A549 (cell line): ENCODE measurements at regions of chr17 and their contacts with region 1.

Region 1: GRCh38 chr17:73710095-73710592 is 65.9 kb upstream of the SDK2 start:
- DNase-seq: peak; percentile 70 to 79
- ATAC-seq: peak; percentile 59 to 90; a peak in 4 of 6 replicates
- H3K4me3 ChIP-seq: no peak overlapping the region
- H3K27ac ChIP-seq: peak overlapping the region in 1 of 2 experiments; percentile 30; a peak in 1 of 6 replicates
- H3K4me1 ChIP-seq: peaks cover 4% of the 10 kb centered on the region; the same call in 2 of the 3 replicates
- CTCF ChIP-seq: peak; percentile 77
- EP300 ChIP-seq: no peak
- POLR2A ChIP-seq: no peak
- RAD21 ChIP-seq: peak; percentile 72 to 84

Region 2: DNA sequence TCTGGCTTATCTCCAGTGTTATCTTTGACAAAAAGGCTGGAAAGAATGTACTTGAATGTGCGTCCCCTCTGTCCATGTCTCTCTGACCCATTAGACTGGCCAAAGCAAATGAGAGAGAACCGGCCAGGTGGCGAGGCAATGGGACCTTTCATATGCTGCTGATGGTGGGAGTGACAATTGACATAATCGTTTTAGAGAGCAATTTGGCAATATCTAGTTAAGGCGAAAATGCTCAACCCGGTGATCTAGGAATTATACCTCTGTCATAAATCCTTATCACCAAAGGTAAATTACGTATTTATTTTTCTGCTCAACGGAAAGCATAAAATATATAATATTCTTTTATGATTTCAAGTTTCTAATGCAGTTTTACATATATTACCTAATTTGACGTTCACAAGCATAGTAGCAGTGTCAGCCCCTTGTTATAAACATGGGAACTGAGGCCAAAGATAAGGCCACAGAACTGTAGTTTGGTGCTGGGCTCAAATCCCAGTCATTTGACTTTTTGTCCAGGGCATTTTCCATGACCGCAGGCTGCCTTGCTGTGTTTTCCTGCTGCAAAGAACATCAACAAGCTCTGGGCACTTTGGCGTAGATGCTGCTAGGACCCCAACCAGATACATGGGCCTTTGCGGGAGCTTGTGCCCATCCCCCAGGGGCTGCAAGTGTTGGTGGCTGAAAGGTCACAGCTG is 51.2 kb before region 1 on chr17:
- CTCF ChIA-PET with region 1: interaction called, 12 read pairs
- POLR2A ChIA-PET with region 1: no interaction called
- DNase-seq: no peak
- ATAC-seq: no peak
- H3K4me3 ChIP-seq: no peak overlapping the region
- H3K27ac ChIP-seq: no peak overlapping the region
- H3K4me1 ChIP-seq: peaks cover 8% of the 10 kb centered on the region; the same call in 1 of the 3 replicates
- CTCF ChIP-seq: no peak
- EP300 ChIP-seq: no peak
- POLR2A ChIP-seq: no peak
- RAD21 ChIP-seq: no peak

Region 3: DNA sequence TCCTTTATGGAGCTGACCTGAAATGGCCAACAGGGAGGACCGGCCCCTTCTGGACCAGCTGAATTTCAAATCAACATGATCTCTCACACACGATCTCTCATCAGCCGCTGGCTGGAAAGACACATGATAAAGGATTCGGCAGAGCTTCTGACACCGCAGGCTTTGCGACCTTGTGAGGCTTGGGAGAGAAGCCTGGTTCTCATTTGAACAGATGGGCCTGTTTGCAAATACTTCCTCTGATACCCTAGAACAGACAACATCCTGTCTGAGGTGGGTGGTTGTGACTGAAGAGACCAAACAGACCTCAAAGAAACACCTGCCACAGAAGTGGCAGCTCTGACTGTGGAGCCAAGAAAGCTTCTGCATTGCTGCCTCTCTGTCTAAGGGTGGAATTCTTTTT is 12.0 kb after region 1 on chr17:
- CTCF ChIA-PET with region 1: interaction called, 21 read pairs
- POLR2A ChIA-PET with region 1: no interaction called
- DNase-seq: no peak
- ATAC-seq: no peak
- H3K4me3 ChIP-seq: no peak overlapping the region
- H3K27ac ChIP-seq: no peak overlapping the region
- H3K4me1 ChIP-seq: no peaks in the 10 kb centered on the region
- CTCF ChIP-seq: no peak
- EP300 ChIP-seq: no peak
- POLR2A ChIP-seq: no peak
- RAD21 ChIP-seq: no peak